IMR-90 (cell line): ENCODE measurements at regions of chr19 and their contacts with region 1.

Region 1: DNA sequence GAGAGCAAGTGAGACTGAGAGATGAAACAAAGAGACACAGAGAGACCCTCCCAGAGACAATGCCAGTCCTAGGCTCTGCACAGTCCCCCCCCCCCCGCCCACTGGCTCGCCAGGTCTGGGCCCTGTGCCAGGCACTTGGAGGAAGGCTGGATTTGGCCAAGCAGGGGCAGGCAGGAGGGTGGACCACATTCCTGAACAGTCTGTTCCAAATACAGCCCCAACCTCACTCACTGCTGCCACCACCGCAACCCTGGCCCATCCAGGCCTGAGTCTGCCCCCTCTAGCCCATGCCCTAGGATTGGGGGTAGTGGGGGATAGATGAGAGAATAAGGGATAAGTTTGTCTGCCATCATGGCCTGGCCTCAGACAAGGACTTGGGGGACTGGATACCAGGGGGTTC is 19.0 kb downstream of the CYP2F1 start:
- DNase-seq: no peak
- ATAC-seq: no peak
- H3K4me3 ChIP-seq: no peak overlapping the region
- H3K27ac ChIP-seq: no peak overlapping the region
- H3K4me1 ChIP-seq: no peaks in the 10 kb centered on the region
- H3K27me3 ChIP-seq: peaks cover 24% of the 10 kb centered on the region
- CTCF ChIP-seq: no peak
- POLR2A ChIP-seq: no peak
- RAD21 ChIP-seq: no peak

Region 2: DNA sequence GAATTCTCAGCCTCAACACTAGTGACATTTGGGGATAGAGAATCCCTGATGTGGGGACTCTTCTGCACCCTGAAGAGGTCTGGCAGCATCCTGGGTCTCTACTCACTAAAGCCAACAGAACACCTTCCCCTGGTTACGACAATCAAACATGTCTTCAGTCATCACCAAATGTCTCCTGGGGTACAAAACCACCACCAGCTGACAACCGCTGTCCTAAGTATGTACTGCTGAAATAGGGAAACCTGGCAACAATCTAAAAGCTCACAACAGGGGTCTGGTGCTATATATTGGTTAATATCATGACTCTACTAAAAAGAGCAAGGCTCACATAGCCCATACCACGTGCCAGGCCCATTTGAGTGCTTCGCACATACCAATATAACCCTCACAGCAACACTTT is 861.6 kb before region 1 on chr19:
- CTCF ChIA-PET with region 1: no interaction called
- POLR2A ChIA-PET with region 1: interaction called, 12 read pairs
- dilution Hi-C with region 1: no loop called
- in situ Hi-C with region 1: no loop called
- intact Hi-C with region 1: no loop called
- DNase-seq: no peak
- ATAC-seq: no peak
- H3K4me3 ChIP-seq: no peak overlapping the region
- H3K27ac ChIP-seq: no peak overlapping the region
- H3K4me1 ChIP-seq: peaks cover 13% of the 10 kb centered on the region
- H3K27me3 ChIP-seq: no peaks in the 10 kb centered on the region
- CTCF ChIP-seq: no peak
- POLR2A ChIP-seq: no peak
- RAD21 ChIP-seq: no peak